A673 (cell line): ENCODE measurements at regions of chr2 and their contacts with region 1.

Region 1: GRCh38 chr2:85215448-85216401 is 82.5 kb downstream of the TCF7L1 start:
- DNase-seq: peak; percentile 96
- H3K4me3 ChIP-seq: peak overlapping the region; percentile 32
- H3K27ac ChIP-seq: peak overlapping the region; percentile 98
- H3K4me1 ChIP-seq: peaks cover 48% of the 10 kb centered on the region
- H3K27me3 ChIP-seq: no peaks in the 10 kb centered on the region
- CTCF ChIP-seq: no peak

Region 2: DNA sequence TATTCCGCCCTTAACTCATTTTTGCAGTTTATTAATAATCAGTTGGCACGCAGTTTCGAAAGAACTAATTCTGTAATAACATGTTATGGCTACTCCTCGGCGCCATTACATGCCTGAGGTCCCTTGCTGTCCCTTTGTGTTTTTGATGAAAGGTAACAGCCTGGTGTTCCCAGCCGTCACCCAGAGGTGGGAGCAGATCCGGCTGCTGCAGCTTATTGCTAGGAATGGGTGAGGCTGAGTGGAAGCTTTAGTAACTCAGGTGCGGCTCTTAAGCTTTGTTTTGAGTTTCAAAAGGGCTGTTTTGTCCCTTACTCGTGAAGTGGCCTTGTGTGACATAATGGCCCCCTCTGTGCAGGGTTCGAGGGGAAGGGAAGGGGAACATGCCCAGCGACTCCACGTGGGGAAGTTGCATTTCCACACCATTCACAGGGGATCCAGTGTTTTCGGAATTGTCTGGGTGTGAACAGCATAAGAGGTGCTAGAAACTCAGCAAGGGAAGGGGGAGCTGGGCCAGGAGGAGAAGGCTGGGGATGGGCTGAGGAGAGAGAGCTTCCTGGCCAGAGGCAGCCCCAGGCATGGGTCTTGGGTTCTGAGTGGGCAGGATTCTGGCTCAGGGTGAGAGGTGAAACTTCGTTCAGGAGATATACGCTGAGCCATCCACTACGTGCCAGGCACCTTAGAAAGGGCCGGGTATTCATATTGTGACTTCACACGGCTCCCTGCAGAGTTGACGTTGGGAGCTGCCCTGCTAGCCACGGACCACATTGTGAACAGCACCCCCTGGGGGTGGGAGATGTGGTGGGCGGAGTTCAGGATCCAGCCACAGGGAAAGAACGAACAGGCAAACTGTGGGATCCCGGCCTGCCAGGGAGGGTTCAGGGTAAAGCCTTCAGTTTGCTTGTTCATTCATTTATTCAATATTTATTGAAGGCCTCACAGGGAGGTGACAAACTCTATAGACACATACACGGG is 27.7 kb after region 1 on chr2:
- CTCF ChIA-PET with region 1: no interaction called
- POLR2A ChIA-PET with region 1: interaction called, 12 read pairs
- intact Hi-C with region 1: no loop called
- DNase-seq: peak; percentile 76
- H3K4me3 ChIP-seq: no peak overlapping the region
- H3K27ac ChIP-seq: no peak overlapping the region
- H3K4me1 ChIP-seq: peaks cover 92% of the 10 kb centered on the region
- H3K27me3 ChIP-seq: no peaks in the 10 kb centered on the region
- CTCF ChIP-seq: peak; percentile 75

Region 3: DNA sequence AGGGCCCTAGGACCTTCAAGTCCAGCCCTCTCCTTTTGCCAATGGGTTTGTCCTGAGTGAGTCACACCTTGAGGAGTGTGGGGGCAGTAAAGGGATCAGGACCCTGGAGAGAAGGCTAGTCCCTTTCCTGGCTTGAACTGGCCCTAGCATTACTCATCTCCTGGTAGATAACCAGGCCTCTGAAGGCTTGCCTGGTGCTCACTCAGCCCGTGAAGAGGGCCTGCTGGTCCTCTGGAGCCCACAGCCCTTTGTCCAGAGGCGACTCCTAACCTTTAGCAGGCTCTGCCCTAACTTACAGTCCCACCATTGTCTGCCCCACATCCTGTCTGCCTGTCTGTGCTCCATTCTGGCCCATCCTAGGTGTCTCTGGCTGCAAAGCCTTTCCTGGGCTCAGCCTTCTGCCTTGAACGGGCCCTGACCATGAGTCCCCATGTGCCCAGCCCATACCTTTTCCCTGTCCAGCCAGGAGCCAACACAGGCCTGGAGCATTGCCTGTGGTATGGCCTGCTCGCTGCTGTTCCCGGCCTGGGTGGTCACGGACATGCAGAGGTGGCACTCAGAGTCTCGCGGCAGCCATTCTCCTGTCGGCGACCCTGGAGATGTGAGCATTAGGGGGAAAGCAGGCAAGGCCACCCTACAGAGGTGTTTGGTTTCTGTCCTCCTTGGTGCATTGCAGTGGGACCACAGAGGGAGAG is 447.3 kb after region 1 on chr2:
- CTCF ChIA-PET with region 1: no interaction called
- POLR2A ChIA-PET with region 1: no interaction called
- intact Hi-C with region 1: no loop called
- DNase-seq: no peak
- H3K4me3 ChIP-seq: no peak overlapping the region
- H3K27ac ChIP-seq: no peak overlapping the region
- H3K4me1 ChIP-seq: no peaks in the 10 kb centered on the region
- H3K27me3 ChIP-seq: no peaks in the 10 kb centered on the region
- CTCF ChIP-seq: no peak